Activated B cell treated with CpG ODN at 0.5 μM for 24 hours (primary cell): ENCODE measurements at regions of chr19 and their contacts with region 1.

Region 1: DNA sequence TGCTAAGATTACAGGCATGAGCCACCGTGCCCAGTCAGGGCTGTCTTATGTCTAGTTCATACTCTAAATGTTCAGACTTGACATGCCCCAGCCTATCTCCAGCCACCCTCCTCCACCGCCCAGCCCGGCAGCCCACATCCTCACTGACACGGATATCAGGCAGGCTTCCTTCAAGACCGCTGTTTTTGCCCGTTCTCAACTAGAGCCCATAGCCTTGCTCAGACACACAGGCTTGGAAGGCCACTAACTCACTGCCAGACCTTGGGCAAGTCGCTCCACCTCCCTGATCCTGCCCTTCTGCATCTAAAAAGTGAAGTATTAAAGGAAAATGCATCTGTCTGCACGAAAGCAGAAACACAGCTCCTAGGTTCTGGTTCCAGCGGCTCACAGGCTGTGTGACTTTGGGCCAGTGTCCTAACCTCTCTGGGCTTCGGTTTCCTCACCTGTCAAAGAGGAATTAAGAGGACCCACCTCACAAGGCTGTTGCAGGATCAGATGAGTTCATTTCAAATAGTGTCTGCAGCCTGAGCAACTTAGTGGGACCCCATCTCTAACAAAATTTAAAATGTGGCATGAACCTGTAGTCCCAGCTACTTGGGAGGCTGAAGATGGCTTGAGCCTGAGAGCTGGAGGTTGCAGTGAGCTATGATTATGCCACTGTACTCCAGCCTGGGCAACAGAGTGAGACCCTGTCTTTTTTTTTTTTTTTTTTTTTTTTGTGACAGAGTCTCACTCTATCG is 14.5 kb upstream of the CERS4 start:
- DNase-seq: peak; percentile 44
- ATAC-seq: peak; percentile 18
- H3K4me3 Mint-ChIP-seq: peak overlapping the region; percentile 80
- H3K27ac Mint-ChIP-seq: peak overlapping the region; percentile 97
- H3K4me1 Mint-ChIP-seq: peaks cover 65% of the 10 kb centered on the region
- H3K27me3 Mint-ChIP-seq: no peaks in the 10 kb centered on the region
- CTCF ChIP-seq: no peak

Region 2: DNA sequence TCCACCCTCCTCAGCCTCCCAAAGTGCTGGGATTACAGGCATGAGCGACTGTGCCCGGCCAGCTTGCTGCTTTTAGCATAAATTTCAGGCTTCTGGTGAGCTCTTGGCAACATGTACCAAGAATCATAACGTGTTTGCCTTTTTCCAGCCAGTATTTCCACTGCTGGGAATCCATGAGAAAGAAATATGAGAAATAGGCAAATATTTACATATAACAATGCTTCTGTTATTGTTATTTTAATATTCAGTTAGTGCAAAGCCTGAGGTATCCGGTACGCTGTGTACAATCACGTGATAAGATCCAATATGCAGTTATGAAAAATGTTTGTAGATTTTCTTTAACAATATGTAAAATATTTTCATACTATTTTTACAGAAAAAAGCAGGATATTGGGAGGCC is 14.6 kb before region 1 on chr19:
- CTCF ChIA-PET with region 1: interaction called, 3 read pairs
- POLR2A ChIA-PET with region 1: interaction called, 10 read pairs
- intact Hi-C with region 1: no loop called
- DNase-seq: no peak
- ATAC-seq: no peak
- H3K4me3 Mint-ChIP-seq: no peak overlapping the region
- H3K27ac Mint-ChIP-seq: no peak overlapping the region
- H3K4me1 Mint-ChIP-seq: peaks cover 16% of the 10 kb centered on the region
- H3K27me3 Mint-ChIP-seq: no peaks in the 10 kb centered on the region
- CTCF ChIP-seq: no peak

Region 3: GRCh38 chr19:8208922-8209461 is 14.3 kb after region 1 on chr19 and contains the start of gene CERS4:
- CTCF ChIA-PET with region 1: interaction called, 5 read pairs
- POLR2A ChIA-PET with region 1: interaction called, 205 read pairs
- intact Hi-C with region 1: loop called (anchors 1 kb)
- DNase-seq: peak; percentile 81
- ATAC-seq: peak; percentile 86
- H3K4me3 Mint-ChIP-seq: peak within 1 kb of the TSS; percentile 96
- H3K27ac Mint-ChIP-seq: peak within 1 kb of the TSS; percentile 81
- H3K4me1 Mint-ChIP-seq: peaks cover 53% of the 10 kb centered on the region
- H3K27me3 Mint-ChIP-seq: no peaks in the 10 kb centered on the region
- CTCF ChIP-seq: no peak
- total RNA-seq, gene CERS4: 112 and 114 TPM in 2 replicates

Region 4: GRCh38 chr19:8240274-8241229 is 45.9 kb after region 1 on chr19:
- CTCF ChIA-PET with region 1: no interaction called
- POLR2A ChIA-PET with region 1: interaction called, 22 read pairs
- intact Hi-C with region 1: loop called (anchors 2 kb)
- DNase-seq: peak; percentile 34
- ATAC-seq: peak; percentile 88
- H3K4me3 Mint-ChIP-seq: peak overlapping the region; percentile 36
- H3K27ac Mint-ChIP-seq: peak overlapping the region; percentile 54
- H3K4me1 Mint-ChIP-seq: peaks cover 57% of the 10 kb centered on the region
- H3K27me3 Mint-ChIP-seq: no peaks in the 10 kb centered on the region
- CTCF ChIP-seq: no peak